Activated T-helper 1 cell treated with anti-CD3 and anti-CD28 coated beads, Interleukin-12 subunit alpha, Interleukin-12 subunit beta, Interleukin-2, Interleukin-4 antibody, amounts not matched to agents 30 ng/mL and 10 ng/mL and 1 ng/mL, durations not matched to agents 14 hours and 24 hours and 36 hours (primary cell): ENCODE measurements at regions of chr22 and their contacts with region 1.

Region 1: DNA sequence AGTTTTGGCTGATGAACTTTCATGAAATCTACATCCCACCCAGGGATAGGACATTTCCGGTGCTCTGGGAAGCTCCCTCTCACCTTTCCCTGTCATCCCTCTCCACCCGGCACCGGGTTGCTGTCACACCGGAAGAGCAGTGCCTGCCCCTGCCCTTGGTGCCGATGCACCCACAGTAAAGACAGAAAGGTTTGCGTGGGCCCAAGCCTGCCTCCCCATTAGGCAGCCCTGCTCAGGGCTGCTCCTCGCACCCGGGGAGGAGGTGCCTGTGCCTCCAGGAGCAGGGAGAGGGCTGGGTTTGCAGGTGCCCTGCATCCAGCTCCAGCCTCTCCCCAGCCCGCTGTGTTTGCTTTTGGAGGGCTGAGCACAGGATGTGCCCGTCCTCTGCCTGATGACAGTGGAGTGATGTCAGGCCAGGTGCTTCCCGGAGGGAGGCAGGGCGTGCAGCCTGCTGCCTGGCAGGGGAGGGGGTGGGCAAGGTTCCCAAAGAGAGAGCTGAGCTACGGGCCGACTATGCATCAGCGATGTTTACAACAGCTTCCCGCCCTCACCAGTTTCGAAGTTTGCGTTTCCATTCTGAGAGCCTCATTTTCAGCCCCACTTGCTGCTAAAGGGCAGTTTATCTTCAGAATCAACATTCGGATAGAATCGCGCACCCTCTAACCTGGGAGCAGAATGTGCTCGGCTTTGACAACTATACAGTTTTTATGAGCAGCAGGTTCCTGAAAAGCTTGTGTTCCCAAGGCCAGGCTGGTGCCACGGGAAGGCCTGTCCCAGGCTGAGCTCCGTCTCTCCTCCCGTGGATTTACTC is 83.2 kb upstream of the CLDN5 start:
- DNase-seq: peak; percentile 31
- H3K4me3 Mint-ChIP-seq: peak overlapping the region; percentile 40
- H3K27ac Mint-ChIP-seq: peak overlapping the region; percentile 61
- H3K4me1 Mint-ChIP-seq: peaks cover 56% of the 10 kb centered on the region
- H3K27me3 Mint-ChIP-seq: peaks cover 2% of the 10 kb centered on the region

Region 2: GRCh38 chr22:19576460-19577421 is 30.7 kb before region 1 on chr22:
- intact Hi-C with region 1: loop called (anchors 2 kb)
- DNase-seq: peak; percentile 60
- H3K4me3 Mint-ChIP-seq: peak overlapping the region; percentile 27
- H3K27ac Mint-ChIP-seq: peak overlapping the region; percentile 80
- H3K4me1 Mint-ChIP-seq: peaks cover 44% of the 10 kb centered on the region
- H3K27me3 Mint-ChIP-seq: no peaks in the 10 kb centered on the region